ENCODE measurements at regions of chr13 and their contacts with region 1.

Region 1: GRCh38 chr13:98653463-98653985 is 76.6 kb upstream of the STK24 start:
- DNase-seq: peak; percentile 89
- H3K4me3 Mint-ChIP-seq: peak overlapping the region; percentile 32
- H3K27ac Mint-ChIP-seq: peak overlapping the region; percentile 54
- H3K4me1 Mint-ChIP-seq: peaks cover 2% of the 10 kb centered on the region
- H3K27me3 Mint-ChIP-seq: no peaks in the 10 kb centered on the region

Region 2: DNA sequence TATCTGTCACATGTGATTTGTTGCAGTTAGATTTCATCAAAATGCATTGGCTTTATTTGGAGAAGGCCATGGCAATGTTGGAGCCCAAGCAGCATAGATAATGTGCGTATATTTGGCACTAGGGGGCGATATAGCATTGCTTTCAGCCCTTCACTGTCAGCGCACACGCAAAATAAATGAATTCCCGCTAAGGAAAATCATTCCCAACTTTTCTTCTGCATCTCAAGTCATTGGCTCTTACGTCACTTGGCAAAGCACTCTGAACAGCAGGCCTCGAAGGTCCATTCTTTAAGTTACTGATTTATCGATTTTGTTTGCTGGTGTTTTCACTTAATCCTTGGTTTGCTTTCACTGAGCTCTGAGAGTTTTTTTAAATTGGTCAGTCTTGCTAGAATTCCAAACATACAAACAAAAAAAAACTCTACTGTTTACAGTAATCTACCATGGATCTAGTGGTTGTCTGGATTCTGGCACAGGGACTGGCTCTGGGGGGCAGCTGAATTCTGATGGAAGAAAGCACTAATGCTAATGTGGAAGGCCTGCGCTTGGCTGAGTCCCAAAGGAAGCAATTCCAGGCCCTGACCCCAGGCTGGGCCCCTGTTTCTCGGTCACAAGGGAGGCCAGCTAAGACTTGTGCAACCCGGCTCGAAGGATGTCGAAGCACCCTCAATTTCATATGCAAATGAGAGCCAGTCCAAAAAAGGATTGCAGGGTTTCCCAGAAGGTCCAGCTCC is 797.8 kb before region 1 on chr13:
- CTCF ChIA-PET with region 1: no interaction called
- intact Hi-C with region 1: loop called (anchors 1 kb)
- DNase-seq: peak; percentile 30
- H3K4me3 Mint-ChIP-seq: no peak overlapping the region
- H3K27ac Mint-ChIP-seq: no peak overlapping the region
- H3K4me1 Mint-ChIP-seq: no peaks in the 10 kb centered on the region
- H3K27me3 Mint-ChIP-seq: peaks cover 13% of the 10 kb centered on the region

Region 3: DNA sequence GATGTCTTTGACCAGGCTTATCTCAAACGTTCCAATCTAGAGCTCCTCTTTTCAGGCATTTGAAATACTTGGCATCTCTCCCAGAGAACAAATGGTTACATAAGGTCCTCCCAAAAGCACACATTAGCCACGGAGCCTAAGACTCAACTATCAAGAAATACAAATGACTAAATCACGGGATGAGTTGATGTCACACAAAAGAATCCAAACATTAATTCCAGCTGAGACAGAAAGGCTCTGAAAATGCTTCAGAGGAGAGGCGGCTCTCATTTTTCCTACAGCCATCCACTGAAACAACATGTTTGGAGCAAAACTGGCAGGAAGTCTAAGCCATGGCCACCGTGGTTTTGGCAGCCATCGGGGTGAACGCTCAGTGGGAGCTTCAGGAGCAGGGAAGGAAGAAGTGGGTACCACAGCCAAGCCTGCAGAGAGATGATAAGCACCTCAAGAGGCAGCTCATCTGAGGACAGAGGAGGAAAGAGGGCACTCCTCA is 199.1 kb before region 1 on chr13:
- CTCF ChIA-PET with region 1: interaction called, 32 read pairs
- intact Hi-C with region 1: no loop called
- DNase-seq: no peak
- H3K4me3 Mint-ChIP-seq: no peak overlapping the region
- H3K27ac Mint-ChIP-seq: no peak overlapping the region
- H3K4me1 Mint-ChIP-seq: peaks cover 19% of the 10 kb centered on the region
- H3K27me3 Mint-ChIP-seq: no peaks in the 10 kb centered on the region

Region 4: GRCh38 chr13:98484289-98485219 is 169.0 kb before region 1 on chr13:
- CTCF ChIA-PET with region 1: interaction called, 15 read pairs
- intact Hi-C with region 1: no loop called
- DNase-seq: peak; percentile 60
- H3K4me3 Mint-ChIP-seq: no peak overlapping the region
- H3K27ac Mint-ChIP-seq: peak overlapping the region; percentile 54
- H3K4me1 Mint-ChIP-seq: peaks cover 83% of the 10 kb centered on the region
- H3K27me3 Mint-ChIP-seq: no peaks in the 10 kb centered on the region

Region 5: DNA sequence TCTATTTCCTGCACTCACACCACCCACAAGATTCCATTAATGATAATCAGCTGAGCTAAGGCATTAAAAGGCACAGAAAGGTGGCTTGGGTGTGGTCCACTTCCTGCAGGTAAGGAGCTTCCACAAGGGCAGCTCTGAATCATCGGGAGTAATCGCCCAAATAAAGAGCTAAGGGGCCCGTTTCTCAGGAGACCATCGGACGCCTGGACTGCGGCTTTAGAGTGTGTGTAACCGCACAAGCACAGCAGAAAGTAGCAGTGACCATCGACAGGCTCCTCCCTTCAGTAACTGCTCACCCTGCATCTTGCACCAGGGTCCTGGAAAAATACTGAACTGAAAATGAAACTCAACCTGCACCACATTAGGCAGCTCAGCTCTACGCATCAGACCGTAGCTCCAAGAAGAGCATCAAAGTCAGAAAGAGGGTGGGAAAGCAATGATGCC is 82.6 kb before region 1 on chr13:
- CTCF ChIA-PET with region 1: interaction called, 5 read pairs
- intact Hi-C with region 1: loop called (anchors 5 kb)
- DNase-seq: peak; percentile 62
- H3K4me3 Mint-ChIP-seq: peak overlapping the region; percentile 76
- H3K27ac Mint-ChIP-seq: peak overlapping the region; percentile 80
- H3K4me1 Mint-ChIP-seq: peaks cover 86% of the 10 kb centered on the region
- H3K27me3 Mint-ChIP-seq: no peaks in the 10 kb centered on the region

Region 6: DNA sequence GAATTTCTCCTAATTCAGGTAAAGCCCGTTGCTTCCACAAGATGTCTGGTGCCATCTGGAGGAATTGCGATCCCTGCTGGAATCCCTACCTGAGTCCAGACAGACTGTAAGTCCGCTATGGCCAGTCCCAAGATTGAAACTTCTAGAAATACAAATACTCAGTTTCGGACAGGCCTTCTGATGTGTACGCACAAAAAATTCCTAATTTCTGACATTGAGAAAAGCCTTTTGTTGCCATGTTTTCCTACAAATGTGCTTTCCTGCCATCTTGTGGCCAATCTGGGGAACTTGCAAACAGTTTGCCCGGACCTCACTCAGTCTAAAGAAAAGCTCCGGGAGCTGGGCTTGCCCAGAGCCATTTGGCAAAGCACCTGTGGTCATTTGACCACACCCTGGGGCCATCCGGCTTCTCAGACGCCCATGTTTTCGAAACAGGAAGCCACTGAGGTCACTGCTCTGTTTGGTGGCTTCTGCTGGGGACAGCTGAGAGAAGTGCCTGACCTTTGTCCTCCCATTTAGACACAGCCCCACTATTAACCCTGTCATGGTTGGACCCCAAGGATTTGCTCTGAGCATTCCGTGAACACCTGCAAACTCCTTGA is 19.5 kb after region 1 on chr13:
- CTCF ChIA-PET with region 1: interaction called, 12 read pairs
- intact Hi-C with region 1: loop called (anchors 1 kb)
- DNase-seq: peak; percentile 66
- H3K4me3 Mint-ChIP-seq: no peak overlapping the region
- H3K27ac Mint-ChIP-seq: no peak overlapping the region
- H3K4me1 Mint-ChIP-seq: no peaks in the 10 kb centered on the region
- H3K27me3 Mint-ChIP-seq: no peaks in the 10 kb centered on the region